A673 (cell line): ENCODE measurements at regions of chr16 and their contacts with region 1.

Region 1: DNA sequence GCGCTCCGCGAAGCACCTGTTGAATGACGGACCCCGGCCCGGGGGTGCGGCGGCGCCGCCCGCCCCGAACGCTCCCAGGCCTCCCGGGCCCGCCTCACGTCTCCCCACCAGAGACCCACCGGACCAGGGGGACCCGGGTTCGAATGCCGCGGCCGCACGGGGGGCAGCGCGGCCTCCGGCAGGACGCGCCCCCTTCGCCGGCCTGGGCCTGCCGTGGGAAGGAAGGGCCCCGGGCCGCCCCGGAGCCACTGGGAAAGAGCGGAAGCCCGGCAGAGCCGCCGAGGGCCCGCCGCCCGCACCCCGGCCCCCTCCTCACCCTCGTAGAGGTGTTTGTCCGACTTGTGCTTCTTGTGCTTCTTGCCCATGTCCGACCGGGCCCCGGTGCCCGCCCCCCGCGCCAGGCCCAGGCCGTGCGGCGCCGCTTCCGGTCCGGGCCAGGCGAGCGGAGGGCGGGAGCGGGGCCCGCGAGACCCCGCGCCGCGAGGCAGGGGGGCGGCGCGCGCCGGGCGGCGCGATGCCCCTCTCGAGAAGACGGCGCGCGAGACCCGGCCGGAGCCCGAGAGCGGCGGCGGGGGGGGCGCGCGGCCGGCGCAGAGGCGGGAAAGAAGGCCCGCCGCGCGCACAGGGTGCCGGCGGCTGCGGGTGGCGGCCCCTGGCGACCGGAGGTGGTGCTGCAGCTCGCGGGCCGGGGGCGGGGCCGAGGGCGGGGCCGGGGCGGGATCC is at the start of gene BRD7:
- DNase-seq: peak; percentile 82
- H3K4me3 ChIP-seq: peak within 1 kb of the TSS; percentile 97
- H3K27ac ChIP-seq: peak within 1 kb of the TSS; percentile 81
- H3K4me1 ChIP-seq: peaks cover 8% of the 10 kb centered on the region
- H3K27me3 ChIP-seq: no peaks in the 10 kb centered on the region
- CTCF ChIP-seq: no peak
- total RNA-seq, gene BRD7: 93.0 and 95.3 TPM in 2 replicates

Region 2: DNA sequence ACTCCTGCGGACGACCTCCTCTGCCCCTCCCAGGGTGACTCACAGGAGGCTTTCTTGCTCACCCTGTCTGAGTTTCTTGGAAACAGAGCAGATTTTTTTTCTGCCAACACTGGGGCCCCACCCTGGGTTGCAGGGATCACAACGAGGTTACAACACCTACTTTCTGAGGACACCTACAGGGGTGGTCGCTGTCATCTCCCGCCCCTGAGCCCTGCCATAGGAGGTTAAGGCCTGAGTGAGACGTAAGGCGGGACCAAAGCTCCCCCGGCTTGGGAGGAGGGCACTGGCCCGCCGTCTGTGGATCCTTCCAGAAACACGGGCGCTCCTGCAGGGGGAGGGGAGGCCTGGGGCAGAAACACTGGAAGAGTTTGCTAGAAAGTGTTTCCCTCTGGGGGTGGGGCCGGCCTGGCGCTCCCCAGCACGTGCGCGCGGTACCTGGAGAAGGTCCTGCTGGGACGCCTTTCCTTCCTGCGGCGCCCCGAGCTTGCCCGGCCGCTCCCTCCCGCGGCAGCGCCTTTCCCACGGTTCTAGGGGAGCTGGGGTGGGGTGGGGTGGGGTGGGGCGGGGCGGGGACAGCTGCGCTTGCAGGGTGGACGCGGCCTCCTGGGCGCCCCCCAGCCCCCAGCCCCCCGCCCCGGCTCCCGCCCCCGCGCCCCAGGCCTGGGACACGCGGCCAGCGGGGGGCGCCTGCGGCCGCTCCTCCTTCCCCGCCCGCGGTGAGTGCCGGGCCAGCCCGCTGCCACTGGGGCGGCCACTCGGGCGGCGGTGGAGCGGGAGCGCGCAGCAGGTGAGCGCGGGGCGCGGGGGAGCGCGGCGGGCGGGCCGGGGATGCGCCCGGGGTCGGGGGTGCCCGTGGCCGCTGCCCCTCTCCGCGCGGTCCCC is 122.9 kb before region 1 on chr16:
- CTCF ChIA-PET with region 1: no interaction called
- POLR2A ChIA-PET with region 1: no interaction called
- intact Hi-C with region 1: no loop called
- DNase-seq: no peak
- H3K4me3 ChIP-seq: peak overlapping the region; percentile 44
- H3K27ac ChIP-seq: no peak overlapping the region
- H3K4me1 ChIP-seq: no peaks in the 10 kb centered on the region
- H3K27me3 ChIP-seq: no peaks in the 10 kb centered on the region
- CTCF ChIP-seq: no peak

Region 3: DNA sequence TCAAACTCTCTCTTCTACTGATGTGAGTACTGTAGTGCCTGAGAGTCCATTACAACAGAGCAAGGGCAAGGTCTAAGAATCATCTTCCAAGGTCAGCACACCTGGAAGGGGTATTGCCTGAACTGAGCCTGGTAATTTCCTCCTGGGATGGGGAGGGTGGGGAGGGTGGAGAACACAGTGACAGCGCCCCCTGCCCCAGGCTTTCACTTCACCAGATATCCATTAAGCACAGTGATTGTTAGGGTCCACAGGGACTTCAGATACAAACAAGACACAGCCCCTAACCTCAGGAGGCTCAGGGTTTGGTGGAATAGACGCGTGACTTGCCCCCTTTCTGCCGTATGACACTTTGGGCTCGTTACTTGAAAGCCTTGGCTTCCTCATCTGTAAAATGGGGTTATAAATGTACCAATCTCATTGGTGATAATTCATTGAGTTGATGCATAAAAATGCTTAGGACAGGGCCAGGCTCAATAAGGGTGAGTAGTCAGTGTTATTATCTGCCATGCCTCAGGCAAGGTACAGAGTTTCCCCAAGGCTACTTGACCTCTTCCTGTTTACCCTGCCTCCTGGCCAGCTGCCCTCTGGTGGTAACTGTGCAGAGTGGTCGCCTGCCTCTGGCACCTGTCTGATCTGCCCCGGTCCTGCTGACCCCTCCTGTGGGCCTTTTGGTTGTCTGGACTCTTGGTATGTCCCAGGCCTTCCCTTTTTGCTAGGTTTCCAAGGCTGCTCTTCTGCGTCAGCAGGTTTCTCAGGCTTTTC is 13.3 kb after region 1 on chr16:
- CTCF ChIA-PET with region 1: interaction called, 12 read pairs
- POLR2A ChIA-PET with region 1: no interaction called
- intact Hi-C with region 1: no loop called
- DNase-seq: no peak
- H3K4me3 ChIP-seq: no peak overlapping the region
- H3K27ac ChIP-seq: no peak overlapping the region
- H3K4me1 ChIP-seq: peaks cover 9% of the 10 kb centered on the region
- H3K27me3 ChIP-seq: no peaks in the 10 kb centered on the region
- CTCF ChIP-seq: no peak

Region 4: GRCh38 chr16:50509521-50510341 is 141.2 kb after region 1 on chr16:
- CTCF ChIA-PET with region 1: no interaction called
- POLR2A ChIA-PET with region 1: no interaction called
- intact Hi-C with region 1: loop called (anchors 2 kb)
- DNase-seq: peak; percentile 35
- H3K4me3 ChIP-seq: no peak overlapping the region
- H3K27ac ChIP-seq: no peak overlapping the region
- H3K4me1 ChIP-seq: no peaks in the 10 kb centered on the region
- H3K27me3 ChIP-seq: no peaks in the 10 kb centered on the region
- CTCF ChIP-seq: peak; percentile 92

Region 5: GRCh38 chr16:50665128-50665878 is 296.7 kb after region 1 on chr16:
- CTCF ChIA-PET with region 1: interaction called, 4 read pairs
- POLR2A ChIA-PET with region 1: no interaction called
- intact Hi-C with region 1: loop called (anchors 10 kb)
- DNase-seq: peak; percentile 73
- H3K4me3 ChIP-seq: peak overlapping the region; percentile 37
- H3K27ac ChIP-seq: no peak overlapping the region
- H3K4me1 ChIP-seq: no peaks in the 10 kb centered on the region
- H3K27me3 ChIP-seq: no peaks in the 10 kb centered on the region
- CTCF ChIP-seq: peak; percentile 79